ENCODE measurements at regions of chr5 and their contacts with region 1.

Region 1: DNA sequence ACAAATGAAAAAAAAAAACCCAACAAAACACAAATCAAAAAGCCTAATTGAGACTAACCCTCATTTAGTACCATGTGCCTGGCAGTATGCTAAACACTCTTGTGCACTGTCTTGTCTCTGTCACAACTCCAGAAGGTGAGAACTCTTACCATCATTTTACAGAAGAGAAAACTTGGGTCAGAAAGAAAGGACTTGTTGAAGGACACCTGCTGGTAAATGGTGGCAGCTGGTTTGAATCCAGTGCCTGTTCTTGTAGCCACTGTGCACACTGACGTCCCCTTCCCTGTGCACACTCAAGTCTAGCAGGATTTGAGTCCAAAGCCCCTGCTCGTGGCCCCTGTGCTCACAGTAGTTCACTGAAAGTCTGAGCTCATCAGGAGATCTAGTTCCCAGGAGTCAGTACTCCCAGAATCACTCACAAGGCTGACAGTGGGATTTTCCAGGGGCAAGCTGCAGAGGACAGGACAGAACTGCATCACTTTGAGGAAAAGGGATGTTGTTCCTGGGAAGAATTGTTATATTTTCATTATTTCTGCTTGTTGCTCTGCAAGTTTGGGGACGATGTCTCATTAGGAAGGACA is 43.0 kb upstream of the HSD17B4 start:
- DNase-seq: no peak
- H3K4me3 ChIP-seq: no peak overlapping the region
- H3K27ac ChIP-seq: no peak overlapping the region
- H3K4me1 ChIP-seq: peaks cover 9 to 28% (median 18%) of the 10 kb centered on the region in 4 donors
- H3K27me3 ChIP-seq: no peaks in the 10 kb centered on the region
- CTCF ChIP-seq: no peak
- EP300 ChIP-seq: no peak
- POLR2A ChIP-seq: no peak

Region 2: DNA sequence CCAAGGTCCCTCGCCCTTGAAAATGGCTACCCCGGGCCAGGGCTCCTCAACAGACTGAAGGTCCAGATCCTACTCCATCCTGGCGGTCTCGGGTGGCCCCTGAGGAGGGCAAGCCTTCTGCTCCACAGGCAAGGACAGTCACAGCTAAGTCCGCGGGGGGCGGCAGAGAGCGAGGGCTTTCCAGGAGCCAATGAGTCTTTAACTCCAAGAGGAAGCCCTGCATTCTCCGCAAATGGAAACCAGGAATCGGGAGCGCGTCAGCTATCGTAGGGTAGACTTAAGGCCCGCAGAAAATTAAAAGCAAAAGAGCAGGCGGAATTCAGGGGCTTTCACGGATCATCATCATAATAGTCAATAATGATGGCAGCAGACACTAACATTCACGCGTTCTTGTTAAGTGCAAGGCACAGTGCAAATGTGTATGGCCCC is 141.4 kb before region 1 on chr5:
- intact Hi-C with region 1: loop called (anchors 10 kb)
- DNase-seq: peak; percentile 93 to 97
- H3K4me3 ChIP-seq: peak overlapping the region; percentile 69 to 79 (median 74)
- H3K27ac ChIP-seq: peak overlapping the region; percentile 91 to 97 (median 93)
- H3K4me1 ChIP-seq: peaks cover 23 to 42% (median 33%) of the 10 kb centered on the region in 4 donors
- H3K27me3 ChIP-seq: no peaks in the 10 kb centered on the region
- CTCF ChIP-seq: peak in 4 of 7 experiments; percentile 23 to 70 (median 28)
- EP300 ChIP-seq: no peak
- POLR2A ChIP-seq: no peak

Region 3: DNA sequence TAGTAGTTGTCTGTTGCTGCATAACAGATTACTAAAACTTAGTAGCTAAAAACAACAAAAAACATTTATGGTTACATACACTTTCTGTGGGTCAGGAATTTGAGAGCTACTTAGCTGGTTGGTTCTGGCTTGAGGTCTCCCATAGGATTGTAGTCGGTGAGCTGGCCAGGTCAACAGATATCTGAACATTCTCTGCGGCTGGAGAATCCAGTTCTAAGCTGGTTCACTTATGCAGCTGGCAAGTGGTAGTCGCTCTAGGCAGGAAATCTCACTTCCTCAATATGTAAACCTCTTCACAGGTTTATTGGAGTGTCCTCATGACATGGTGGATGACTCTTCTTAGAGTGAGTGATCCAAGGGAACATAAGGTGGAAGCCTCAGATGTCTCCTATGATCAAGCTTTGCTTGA is 119.2 kb before region 1 on chr5:
- intact Hi-C with region 1: no loop called
- DNase-seq: peak in 1 of 2 donors; percentile 47
- H3K4me3 ChIP-seq: no peak overlapping the region
- H3K27ac ChIP-seq: peak overlapping the region in 3 of 5 donors; percentile 33 to 52 (median 38)
- H3K4me1 ChIP-seq: peaks cover 47 to 71% (median 56%) of the 10 kb centered on the region in 4 donors
- H3K27me3 ChIP-seq: no peaks in the 10 kb centered on the region
- CTCF ChIP-seq: no peak
- EP300 ChIP-seq: no peak
- POLR2A ChIP-seq: no peak

Region 4: DNA sequence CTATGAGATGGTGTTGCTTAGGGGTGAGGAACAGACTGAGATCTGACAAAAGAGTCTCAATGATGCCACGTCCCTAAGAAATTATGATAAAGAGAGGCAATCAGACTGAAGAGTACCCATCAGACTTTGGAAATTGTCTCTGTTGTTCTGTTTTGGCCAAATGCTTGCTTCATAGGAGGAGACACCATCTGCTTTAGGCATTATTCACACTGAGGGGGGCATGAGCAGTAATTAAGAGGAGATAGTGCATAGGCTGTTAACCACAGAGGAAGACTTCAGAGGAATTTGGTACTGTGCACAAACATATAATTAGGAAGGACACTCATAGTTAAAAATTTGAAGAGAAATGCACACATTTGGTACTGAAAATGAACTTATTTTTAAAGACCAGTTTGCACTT is 410.7 kb after region 1 on chr5:
- intact Hi-C with region 1: no loop called
- DNase-seq: no peak
- H3K4me3 ChIP-seq: no peak overlapping the region
- H3K27ac ChIP-seq: no peak overlapping the region
- H3K4me1 ChIP-seq: no peaks in the 10 kb centered on the region
- H3K27me3 ChIP-seq: no peaks in the 10 kb centered on the region
- CTCF ChIP-seq: no peak
- EP300 ChIP-seq: no peak
- POLR2A ChIP-seq: no peak

Measured in stomach (tissue), 19 donors.